Psoas muscle (tissue), 8 donors: ENCODE measurements at regions of chr1 and their contacts with region 1.

Region 1: DNA sequence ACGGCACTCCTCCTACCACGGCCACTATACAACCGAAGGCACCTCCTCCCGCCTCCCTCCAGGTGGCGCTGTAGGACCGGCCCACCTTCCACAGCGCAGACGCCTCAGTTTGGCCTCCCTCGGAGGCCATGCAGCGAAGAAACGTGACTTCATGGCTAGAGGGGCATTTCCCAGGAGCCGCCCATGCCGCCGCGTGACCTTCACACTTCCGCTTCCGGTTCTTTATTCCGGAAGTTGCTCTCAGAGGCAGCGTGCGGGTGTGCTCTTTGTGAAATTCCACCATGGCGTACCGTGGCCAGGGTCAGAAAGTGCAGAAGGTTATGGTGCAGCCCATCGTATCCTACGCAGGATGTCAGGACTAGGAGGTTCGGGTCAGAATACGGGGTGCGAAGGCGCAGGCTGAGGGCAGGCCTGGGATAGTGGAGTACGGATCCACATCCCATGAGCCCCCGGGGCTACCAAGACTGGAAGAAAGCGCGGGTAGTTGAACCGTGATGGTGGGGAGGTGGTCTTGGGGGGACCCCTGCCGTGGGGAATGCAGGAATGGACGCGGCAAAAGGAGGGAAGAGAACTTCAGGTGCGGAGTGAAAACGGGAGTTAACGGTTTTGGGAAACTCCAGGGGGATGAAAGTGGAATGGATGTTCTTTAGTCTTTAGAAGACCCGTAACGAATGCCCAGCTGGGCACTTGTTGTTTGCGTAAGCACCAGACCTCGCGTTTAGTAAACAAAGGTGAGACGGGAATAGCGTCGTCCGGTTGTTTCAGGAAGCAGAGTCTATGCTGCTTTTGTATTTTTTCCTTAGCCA is at the start of gene SNRPE:
- DNase-seq: peak; percentile 95 to 98
- ATAC-seq: peak; percentile 97 to 98 (median 98)
- H3K4me3 ChIP-seq: peak within 1 kb of the TSS; percentile 100
- H3K27ac ChIP-seq: peak within 1 kb of the TSS; percentile 91
- H3K4me1 ChIP-seq: peaks cover 17% of the 10 kb centered on the region
- H3K27me3 ChIP-seq: no peaks in the 10 kb centered on the region
- CTCF ChIP-seq: peak; percentile 95
- total RNA-seq, gene SNRPE: 30.4 to 68.1 (median 56.6) TPM

Region 2: GRCh38 chr1:203581841-203582240 is 279.7 kb before region 1 on chr1:
- intact Hi-C with region 1: no loop called
- DNase-seq: no peak
- ATAC-seq: no peak
- H3K4me3 ChIP-seq: no peak overlapping the region
- H3K27ac ChIP-seq: no peak overlapping the region
- H3K4me1 ChIP-seq: no peaks in the 10 kb centered on the region
- H3K27me3 ChIP-seq: no peaks in the 10 kb centered on the region
- CTCF ChIP-seq: no peak

Region 3: DNA sequence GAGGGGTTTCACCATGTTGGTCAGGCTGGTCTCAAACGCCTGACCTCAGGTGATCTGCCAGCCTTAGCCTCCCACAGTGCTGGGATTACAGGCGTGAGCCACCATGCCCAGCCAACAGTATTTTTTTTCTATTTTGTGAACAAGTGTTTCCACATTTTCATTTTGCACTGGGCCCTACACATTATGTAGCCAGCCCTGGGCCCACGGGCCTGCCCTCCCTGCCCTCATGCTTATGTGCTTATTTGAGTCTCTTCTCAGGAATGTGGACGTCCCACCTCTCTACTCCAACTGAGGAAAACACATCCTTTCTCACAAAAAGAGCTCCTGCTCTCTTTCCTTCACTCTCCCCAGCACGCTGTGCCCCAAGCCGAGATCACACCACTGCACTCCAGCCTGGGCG is 79.6 kb before region 1 on chr1:
- intact Hi-C with region 1: no loop called
- DNase-seq: no peak
- ATAC-seq: no peak
- H3K4me3 ChIP-seq: no peak overlapping the region
- H3K27ac ChIP-seq: no peak overlapping the region
- H3K4me1 ChIP-seq: no peaks in the 10 kb centered on the region
- H3K27me3 ChIP-seq: no peaks in the 10 kb centered on the region
- CTCF ChIP-seq: no peak

Region 4: GRCh38 chr1:203906932-203907331 is 45.4 kb after region 1 on chr1:
- intact Hi-C with region 1: no loop called
- DNase-seq: no peak
- ATAC-seq: no peak
- H3K4me3 ChIP-seq: no peak overlapping the region
- H3K27ac ChIP-seq: no peak overlapping the region
- H3K4me1 ChIP-seq: no peaks in the 10 kb centered on the region
- H3K27me3 ChIP-seq: no peaks in the 10 kb centered on the region
- CTCF ChIP-seq: no peak

Region 5: DNA sequence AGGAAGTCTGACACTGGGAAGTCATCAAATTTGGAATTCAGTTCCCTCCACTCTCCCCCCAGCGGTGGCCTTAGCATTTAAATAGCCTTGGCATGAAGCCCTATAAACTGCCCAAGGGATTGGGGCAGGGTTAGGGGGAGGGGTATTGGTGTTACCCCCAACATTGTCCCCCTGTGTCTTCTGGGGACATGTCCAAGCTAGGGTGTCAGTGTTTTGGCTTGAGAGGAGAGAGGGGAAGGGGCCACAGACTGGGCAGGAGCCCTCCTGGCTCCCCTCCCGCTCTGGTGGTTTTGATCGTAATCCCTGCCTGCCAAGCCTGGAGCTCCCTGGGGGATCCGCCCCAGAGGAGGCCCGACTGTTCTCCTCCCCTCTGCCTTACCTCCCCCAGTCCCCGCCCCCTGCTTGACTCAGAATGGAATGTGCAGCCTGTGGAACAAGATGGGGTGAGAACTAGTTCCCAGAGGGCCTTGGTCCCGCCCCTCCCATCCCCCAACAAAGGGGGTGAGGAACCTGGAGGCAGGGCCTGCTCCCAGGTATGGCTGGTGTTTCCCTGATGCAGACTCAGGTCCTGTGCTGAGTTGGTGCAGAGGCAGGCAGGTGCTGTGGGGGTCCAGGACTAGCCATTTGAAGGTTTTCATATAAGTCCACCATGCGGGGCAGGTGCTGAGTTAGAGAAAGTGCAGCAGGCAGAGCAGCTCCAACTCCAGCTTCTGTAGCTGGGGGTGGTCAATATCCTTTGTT is 218.8 kb after region 1 on chr1:
- intact Hi-C with region 1: loop called in 1 of 2 experiments (anchors 5 kb)
- DNase-seq: peak; percentile 68 to 89
- ATAC-seq: peak; percentile 18 to 84 (median 63)
- H3K4me3 ChIP-seq: peak overlapping the region; percentile 18
- H3K27ac ChIP-seq: peak overlapping the region; percentile 65
- H3K4me1 ChIP-seq: peaks cover 87% of the 10 kb centered on the region
- H3K27me3 ChIP-seq: no peaks in the 10 kb centered on the region
- CTCF ChIP-seq: no peak

Region 6: GRCh38 chr1:204207136-204207616 is 345.6 kb after region 1 on chr1:
- intact Hi-C with region 1: loop called in 1 of 2 experiments (anchors 2 kb)
- DNase-seq: peak; percentile 74 to 85
- ATAC-seq: peak; percentile 96 to 98 (median 96)
- H3K4me3 ChIP-seq: no peak overlapping the region
- H3K27ac ChIP-seq: no peak overlapping the region
- H3K4me1 ChIP-seq: no peaks in the 10 kb centered on the region
- H3K27me3 ChIP-seq: peaks cover 0 to 2% (median 0%) of the 10 kb centered on the region in 3 donors
- CTCF ChIP-seq: peak; percentile 85